Activated naive CD4-positive, alpha-beta T cell treated with anti-CD3 and anti-CD28 coated beads for 36 hours (primary cell): ENCODE measurements at regions of chr3 and their contacts with region 1.

Region 1: DNA sequence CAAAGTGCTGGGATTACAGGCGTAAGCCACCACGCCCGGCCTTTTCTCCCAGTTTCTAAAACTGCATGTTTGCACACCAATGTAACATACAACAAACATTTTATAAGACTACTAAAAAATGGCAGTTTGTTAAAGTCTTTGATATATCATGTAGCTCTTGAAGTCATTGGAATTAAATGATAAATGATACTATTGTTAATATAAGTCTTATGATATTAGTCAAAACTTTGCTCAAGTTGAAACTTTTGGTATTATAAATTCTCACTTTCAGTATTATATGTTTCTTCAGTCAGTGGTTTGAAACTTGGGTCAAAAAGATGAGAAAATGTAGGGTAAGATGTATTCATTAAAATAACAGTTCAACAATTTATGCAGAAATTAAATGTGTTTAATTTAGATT is 117.6 kb upstream of the TBL1XR1 start:
- DNase-seq: no peak
- H3K4me3 Mint-ChIP-seq: no peak overlapping the region
- H3K27ac Mint-ChIP-seq: peak overlapping the region; percentile 46
- H3K4me1 Mint-ChIP-seq: peaks cover 25% of the 10 kb centered on the region
- H3K27me3 Mint-ChIP-seq: peaks cover 1% of the 10 kb centered on the region

Region 2: DNA sequence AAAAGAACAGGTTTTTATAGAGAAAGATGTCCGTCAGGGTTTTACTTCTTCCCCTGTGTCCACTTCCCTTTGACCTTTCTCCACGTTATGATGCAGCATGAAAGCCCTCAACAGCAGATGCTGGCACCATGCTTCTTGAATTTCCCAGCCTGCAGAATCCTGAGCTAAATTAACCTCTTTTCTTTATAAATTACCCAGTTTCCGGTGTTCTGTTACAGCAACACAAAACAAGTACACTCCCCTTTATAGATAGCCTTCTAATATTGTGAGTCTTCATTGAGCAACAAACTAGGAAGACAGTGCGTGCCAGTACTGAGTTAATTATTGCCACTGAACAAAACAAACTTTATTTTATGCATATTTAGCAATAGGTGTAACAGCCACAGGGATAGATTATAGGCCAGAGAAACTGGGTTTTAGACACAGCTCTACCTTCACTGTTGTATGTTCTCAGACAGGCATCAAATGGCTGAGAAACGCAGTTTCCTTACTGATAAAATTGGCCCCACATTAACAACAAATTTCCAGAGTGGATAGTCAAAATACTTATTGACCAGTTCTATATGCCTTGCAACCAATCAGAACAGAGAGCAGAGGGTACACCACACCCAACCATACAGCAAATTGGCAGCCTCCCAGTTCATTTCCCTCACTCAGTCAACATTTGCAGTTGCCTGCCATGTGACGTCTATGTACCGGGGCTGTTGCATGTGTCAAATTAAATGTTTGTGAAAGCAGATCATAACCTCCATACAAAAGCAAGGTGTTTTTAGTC is 103.2 kb before region 1 on chr3:
- CTCF ChIA-PET with region 1: no interaction called
- intact Hi-C with region 1: no loop called
- DNase-seq: peak; percentile 33
- H3K4me3 Mint-ChIP-seq: no peak overlapping the region
- H3K27ac Mint-ChIP-seq: no peak overlapping the region
- H3K4me1 Mint-ChIP-seq: peaks cover 8% of the 10 kb centered on the region
- H3K27me3 Mint-ChIP-seq: no peaks in the 10 kb centered on the region

Region 3: DNA sequence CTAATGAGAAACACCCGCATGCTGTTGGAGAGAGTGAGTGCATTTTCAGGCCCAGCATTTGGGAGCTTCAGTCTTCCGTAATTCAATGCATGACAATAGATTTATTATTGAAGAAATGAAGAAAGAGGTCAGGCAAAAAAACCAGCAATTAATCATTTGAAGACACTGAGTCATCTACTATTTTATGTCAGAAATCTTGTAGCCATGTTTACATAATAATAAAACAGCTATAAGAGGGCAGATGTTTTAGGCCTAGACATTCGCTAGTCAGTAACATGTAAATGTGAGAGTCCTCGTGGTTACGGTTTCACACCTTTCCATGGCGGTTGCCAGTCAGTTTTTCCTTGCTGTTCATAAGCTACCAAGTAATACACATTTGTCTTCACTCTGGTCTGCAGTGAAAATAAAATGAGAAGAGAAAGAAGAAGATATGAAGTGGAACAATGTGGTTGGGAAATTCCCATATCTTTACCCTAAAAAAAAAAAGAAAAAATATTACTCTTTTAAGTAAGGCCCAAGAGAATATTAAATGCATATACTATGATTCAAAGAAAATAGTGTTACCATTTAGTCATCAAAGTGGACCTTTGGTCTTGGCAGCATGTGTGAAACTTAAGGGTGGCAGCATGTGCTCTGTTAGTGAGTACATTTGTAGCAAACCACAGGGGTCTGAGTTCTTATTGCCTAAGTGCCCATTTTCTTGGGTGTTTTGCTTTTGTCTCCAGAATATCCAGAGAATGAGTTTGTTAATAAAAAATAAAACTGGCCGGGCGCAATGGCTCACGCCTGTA is 22.8 kb after region 1 on chr3:
- CTCF ChIA-PET with region 1: interaction called, 5 read pairs
- intact Hi-C with region 1: loop called (anchors 1 kb)
- DNase-seq: peak; percentile 91
- H3K4me3 Mint-ChIP-seq: no peak overlapping the region
- H3K27ac Mint-ChIP-seq: peak overlapping the region; percentile 42
- H3K4me1 Mint-ChIP-seq: peaks cover 36% of the 10 kb centered on the region
- H3K27me3 Mint-ChIP-seq: peaks cover 5% of the 10 kb centered on the region

Region 4: DNA sequence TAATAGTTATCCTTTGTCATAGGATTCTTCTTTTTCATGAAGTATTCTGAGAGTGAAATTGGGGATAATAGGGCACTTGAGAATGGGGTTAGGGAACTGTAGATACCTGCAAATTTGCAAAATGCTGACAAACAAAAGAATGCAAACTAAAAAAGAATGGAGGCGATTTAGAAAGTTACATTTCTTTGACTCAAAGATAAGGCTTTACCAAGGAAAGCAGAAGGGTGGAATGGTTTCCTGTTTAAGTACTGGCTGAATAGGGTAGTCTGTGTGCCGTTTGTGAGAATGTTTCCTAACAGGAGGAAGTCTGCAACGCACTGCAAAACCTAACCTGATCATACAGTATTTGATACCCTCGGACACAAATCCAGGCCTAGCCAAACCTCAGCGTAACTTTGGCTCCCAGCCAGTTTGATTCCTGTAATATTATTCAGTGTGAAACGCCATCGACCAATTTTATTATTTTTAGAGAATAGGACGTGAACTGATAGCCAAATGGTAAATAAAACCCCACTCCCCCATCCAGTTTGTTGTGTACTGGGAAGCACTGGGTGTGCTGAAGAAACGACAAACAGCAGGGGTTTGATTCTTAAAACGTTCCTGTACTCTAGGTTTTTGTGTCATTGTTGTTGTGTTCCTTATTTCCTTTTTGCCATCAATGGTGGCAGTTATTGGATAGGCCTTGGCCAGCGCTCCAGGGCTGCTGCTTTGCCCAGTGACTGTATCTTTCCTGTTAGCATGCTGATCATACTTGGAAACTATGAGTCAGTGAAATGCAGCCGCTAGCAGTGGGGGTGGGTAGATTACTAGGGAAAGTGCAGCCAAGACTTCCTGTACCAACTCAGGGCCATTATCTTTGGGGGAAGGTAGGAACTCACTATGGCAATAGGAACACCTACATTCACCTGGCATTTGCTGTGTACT is 30.4 kb after region 1 on chr3:
- CTCF ChIA-PET with region 1: interaction called, 3 read pairs
- intact Hi-C with region 1: loop called (anchors 1 kb)
- DNase-seq: peak; percentile 86
- H3K4me3 Mint-ChIP-seq: peak overlapping the region; percentile 34
- H3K27ac Mint-ChIP-seq: peak overlapping the region; percentile 87
- H3K4me1 Mint-ChIP-seq: peaks cover 42% of the 10 kb centered on the region
- H3K27me3 Mint-ChIP-seq: no peaks in the 10 kb centered on the region

Region 5: GRCh38 chr3:177351206-177352158 is 36.6 kb after region 1 on chr3:
- CTCF ChIA-PET with region 1: no interaction called
- intact Hi-C with region 1: loop called (anchors 1 kb)
- DNase-seq: peak; percentile 48
- H3K4me3 Mint-ChIP-seq: no peak overlapping the region
- H3K27ac Mint-ChIP-seq: peak overlapping the region; percentile 60
- H3K4me1 Mint-ChIP-seq: peaks cover 43% of the 10 kb centered on the region
- H3K27me3 Mint-ChIP-seq: no peaks in the 10 kb centered on the region

Region 6: GRCh38 chr3:177419904-177420601 is 105.2 kb after region 1 on chr3:
- CTCF ChIA-PET with region 1: no interaction called
- intact Hi-C with region 1: loop called (anchors 1 kb)
- DNase-seq: peak; percentile 53
- H3K4me3 Mint-ChIP-seq: no peak overlapping the region
- H3K27ac Mint-ChIP-seq: peak overlapping the region; percentile 86
- H3K4me1 Mint-ChIP-seq: peaks cover 27% of the 10 kb centered on the region
- H3K27me3 Mint-ChIP-seq: peaks cover 2% of the 10 kb centered on the region

Region 7: DNA sequence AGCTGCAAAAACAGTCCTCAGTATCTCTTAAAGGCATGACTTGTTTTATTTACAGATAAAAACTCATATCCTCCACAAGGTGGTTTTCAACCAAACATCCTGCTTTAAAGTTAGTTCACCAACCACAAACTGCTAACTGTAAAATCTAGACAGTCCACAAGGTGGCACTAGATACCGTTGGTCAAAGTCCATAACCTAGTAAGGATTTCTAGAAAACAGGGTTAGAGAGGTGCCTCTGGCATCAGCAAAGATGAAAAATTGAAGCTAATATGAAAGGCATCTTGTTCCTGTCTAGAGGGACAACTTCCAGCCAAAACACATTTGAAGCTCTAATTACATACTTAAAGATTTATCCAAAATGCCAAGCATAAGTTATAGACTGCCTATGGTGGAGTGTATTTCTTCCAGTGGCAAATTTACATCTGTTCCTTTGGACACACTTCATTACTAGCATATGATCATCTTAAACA is 1700.7 kb after region 1 on chr3:
- CTCF ChIA-PET with region 1: no interaction called
- intact Hi-C with region 1: no loop called
- DNase-seq: peak; percentile 81
- H3K4me3 Mint-ChIP-seq: no peak overlapping the region
- H3K27ac Mint-ChIP-seq: no peak overlapping the region
- H3K4me1 Mint-ChIP-seq: peaks cover 35% of the 10 kb centered on the region
- H3K27me3 Mint-ChIP-seq: no peaks in the 10 kb centered on the region